Activated T-helper 2 cell treated with anti-CD3 and anti-CD28 coated beads, Interferon-gamma antibody, Interleukin-2, Interleukin-4, amounts not matched to agents 10 μg/mL and 5 μg/mL and 100 μg/mL, durations not matched to agents 14 hours and 24 hours and 36 hours (primary cell): ENCODE measurements at regions of chr12 and their contacts with region 1.

Region 1: GRCh38 chr12:69359531-69360347 is at the start of gene YEATS4:
- DNase-seq: peak; percentile 88
- H3K4me3 Mint-ChIP-seq: peak within 1 kb of the TSS; percentile 84
- H3K27ac Mint-ChIP-seq: peak within 1 kb of the TSS; percentile 97
- H3K4me1 Mint-ChIP-seq: peaks cover 30% of the 10 kb centered on the region
- H3K27me3 Mint-ChIP-seq: peaks cover 3% of the 10 kb centered on the region
- total RNA-seq, gene YEATS4: 38.9 and 39.0 TPM in 2 replicates

Region 2: DNA sequence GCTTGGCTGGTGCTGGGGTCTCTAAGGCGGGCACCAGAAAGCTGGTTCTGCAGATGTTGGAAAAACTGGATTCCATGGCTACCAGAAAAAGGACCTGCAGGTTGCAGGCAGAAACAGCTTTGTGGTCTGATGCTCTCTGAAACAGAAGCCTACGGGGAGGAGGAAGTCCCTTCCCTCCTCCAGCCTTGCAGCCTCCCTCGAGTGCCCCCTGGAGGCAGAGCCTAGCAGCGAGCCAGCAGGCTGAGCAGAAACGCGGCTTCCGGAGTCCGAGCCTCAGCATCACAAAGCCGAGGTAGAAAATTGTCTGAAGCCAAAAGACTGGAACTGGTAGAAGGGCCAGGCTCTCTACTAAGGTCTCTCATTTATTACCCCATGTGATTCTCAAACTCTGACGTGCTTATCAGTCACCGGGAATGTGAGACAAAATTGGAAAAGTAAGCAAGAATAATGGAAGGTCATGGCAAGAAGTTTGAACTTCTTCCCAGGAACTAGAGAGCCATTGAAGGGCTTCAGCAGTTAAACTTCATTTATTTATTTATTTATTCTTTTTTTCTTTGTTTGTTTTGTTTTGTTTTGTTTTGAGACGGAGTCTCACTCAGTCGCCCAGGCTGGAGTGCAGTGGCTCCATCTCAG is 202.6 kb before region 1 on chr12:
- intact Hi-C with region 1: loop called (anchors 1 kb)
- DNase-seq: peak; percentile 85
- H3K4me3 Mint-ChIP-seq: no peak overlapping the region
- H3K27ac Mint-ChIP-seq: no peak overlapping the region
- H3K4me1 Mint-ChIP-seq: peaks cover 47% of the 10 kb centered on the region
- H3K27me3 Mint-ChIP-seq: no peaks in the 10 kb centered on the region

Region 3: DNA sequence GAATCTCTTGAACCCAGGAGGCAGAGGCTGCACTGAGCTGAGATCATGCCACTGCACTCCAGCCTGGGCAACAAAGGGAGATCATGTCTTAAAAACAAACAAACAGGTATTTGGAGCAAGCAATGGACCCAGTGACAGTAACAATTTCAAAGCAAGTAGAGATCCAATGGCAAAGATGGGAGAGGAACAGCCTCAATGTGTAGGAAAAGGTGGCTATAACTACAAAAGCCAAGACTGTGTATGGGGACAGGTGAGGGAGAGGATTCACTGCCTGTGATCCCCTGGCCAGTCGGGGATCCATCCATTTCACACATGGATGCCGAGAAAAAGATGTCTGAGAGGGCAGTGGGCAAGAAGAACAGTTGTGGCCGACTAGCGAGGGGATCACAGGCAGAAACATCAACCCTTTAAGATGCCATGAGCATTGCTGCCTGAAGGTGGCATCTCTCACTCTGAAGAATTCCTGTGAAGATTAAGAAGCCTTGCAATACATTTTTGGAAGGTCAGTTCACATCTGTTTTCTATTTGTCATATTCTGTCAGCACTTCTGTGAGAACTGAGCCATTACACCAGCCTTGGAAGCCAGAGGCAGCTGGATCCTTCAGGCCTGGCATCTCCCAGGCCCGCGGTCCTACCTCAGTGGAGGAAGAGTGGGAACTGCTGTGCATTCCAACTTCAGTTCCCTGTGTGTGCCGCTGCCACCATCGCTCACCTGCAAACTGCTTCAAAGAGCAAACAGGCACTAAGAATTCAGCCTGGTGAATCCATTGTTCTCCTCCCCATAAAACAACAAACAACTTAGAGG is 55.9 kb after region 1 on chr12:
- intact Hi-C with region 1: loop called (anchors 2 kb)
- DNase-seq: no peak
- H3K4me3 Mint-ChIP-seq: no peak overlapping the region
- H3K27ac Mint-ChIP-seq: no peak overlapping the region
- H3K4me1 Mint-ChIP-seq: no peaks in the 10 kb centered on the region
- H3K27me3 Mint-ChIP-seq: no peaks in the 10 kb centered on the region

Region 4: GRCh38 chr12:69585189-69586062 is 225.7 kb after region 1 on chr12 and contains the start of gene CCT2:
- intact Hi-C with region 1: loop called (anchors 1 kb)
- DNase-seq: peak; percentile 95
- H3K4me3 Mint-ChIP-seq: peak within 1 kb of the TSS; percentile 97
- H3K27ac Mint-ChIP-seq: peak within 1 kb of the TSS; percentile 97
- H3K4me1 Mint-ChIP-seq: peaks cover 15% of the 10 kb centered on the region
- H3K27me3 Mint-ChIP-seq: no peaks in the 10 kb centered on the region
- total RNA-seq, gene CCT2: 409 and 416 TPM in 2 replicates

Region 5: DNA sequence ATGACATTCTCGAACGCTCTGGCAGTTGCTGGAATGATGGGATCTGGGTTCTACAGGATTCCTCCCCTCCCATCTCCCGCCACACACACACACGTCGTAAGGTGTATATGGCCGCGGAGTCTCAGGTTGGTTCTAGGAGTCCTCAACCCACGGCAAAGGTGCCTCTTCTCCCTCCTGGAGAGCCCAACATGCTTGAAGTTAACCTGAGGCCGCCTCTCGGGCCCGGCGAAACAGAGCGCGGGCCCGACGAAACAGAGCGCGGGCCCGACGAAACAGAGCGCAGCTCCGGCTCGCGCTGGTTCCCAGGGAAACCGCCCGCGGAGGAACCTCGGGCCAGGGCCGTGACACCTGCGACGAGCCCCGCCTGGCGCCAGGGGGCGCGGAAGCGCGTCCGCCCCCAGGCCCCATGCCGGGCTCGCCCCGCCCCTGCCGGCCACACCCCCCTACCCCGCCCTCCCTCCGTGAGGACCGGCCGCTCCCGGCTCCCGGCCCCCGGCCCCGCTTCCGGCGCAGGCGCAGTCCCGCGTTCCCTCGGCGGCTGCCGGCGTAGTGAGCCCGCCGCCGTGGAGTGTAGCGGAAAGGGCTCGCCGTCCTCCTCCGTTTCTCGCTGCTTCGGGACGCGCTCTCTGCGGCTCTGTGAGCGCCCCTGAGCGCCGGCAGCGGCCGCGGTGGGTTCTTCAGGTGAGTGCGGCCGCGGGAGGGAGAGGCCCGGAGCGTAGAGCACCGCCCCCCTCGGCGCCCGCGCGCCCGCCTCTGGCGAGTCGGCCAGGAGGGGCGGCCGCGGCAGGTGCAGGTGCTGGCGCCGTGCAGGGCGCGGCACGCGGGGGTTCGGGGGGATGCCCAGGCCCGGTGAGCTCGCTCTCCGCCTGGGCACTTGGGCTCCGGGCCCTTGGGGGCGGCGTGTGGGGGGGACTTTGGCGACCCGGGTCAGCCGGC is 378.9 kb after region 1 on chr12 and contains the start of gene RAB3IP:
- intact Hi-C with region 1: loop called (anchors 5 kb)
- DNase-seq: peak; percentile 87
- H3K4me3 Mint-ChIP-seq: peak within 1 kb of the TSS; percentile 81
- H3K27ac Mint-ChIP-seq: peak within 1 kb of the TSS; percentile 70
- H3K4me1 Mint-ChIP-seq: peaks cover 13% of the 10 kb centered on the region
- H3K27me3 Mint-ChIP-seq: peaks cover 33% of the 10 kb centered on the region
- total RNA-seq, gene RAB3IP: 29.8 and 37.7 TPM in 2 replicates